ENCODE measurements at regions of chr10 and their contacts with region 1.

Region 1: DNA sequence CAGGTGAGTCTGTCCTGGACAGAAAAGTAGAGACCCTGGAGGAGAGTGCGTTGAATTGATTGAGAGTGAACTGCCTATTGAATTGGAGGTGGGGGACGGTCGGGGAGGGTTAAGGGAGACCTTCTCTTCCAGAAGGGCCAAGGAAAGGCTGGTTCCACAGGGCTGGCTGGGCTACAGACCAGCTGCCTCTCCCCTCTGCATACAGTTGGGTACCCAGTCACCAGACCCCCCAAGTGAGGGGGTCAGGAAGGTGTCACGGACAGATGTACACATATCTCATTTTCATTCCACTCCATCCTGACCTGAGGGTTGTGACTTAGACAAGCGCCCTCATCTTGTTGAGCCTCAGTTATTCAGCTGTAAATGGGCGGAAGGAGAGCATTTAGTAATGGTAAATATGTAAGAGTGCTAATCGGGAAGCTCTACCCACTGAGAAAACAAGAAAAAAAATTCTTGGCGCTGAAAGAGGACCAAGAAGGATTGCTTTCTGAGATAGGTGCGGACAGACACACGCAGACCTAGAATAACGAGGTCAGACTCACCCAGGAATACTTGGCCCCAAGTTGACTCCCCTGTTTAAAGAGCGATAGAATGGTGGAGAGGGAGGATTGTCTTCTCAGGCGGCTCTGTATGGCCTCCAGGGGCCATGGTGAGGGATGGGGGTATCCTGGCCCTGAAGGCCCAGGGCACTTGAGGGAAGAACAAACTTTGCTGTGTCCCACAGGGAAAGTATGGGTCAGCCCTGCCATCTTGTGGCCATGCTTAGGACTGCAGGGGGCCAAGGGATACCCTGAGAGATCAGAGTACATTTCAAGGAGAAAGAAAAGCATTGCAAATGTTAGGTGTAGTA is 7.2 kb upstream of the MBL2 start:
- DNase-seq: peak; percentile 81
- H3K4me3 ChIP-seq: peak overlapping the region in 1 of 2 experiments; percentile 57; a peak in 1 of 4 replicates
- H3K27ac ChIP-seq: no peak overlapping the region; a peak in 1 of 4 replicates
- H3K4me1 ChIP-seq: peaks cover 0 to 2% of the 10 kb centered on the region in 2 experiments; a peak in 1 of 4 replicates
- H3K27me3 ChIP-seq: no peaks in the 10 kb centered on the region
- CTCF ChIP-seq: peak; percentile 93
- EP300 ChIP-seq: no peak
- RAD21 ChIP-seq: peak; percentile 96

Region 2: DNA sequence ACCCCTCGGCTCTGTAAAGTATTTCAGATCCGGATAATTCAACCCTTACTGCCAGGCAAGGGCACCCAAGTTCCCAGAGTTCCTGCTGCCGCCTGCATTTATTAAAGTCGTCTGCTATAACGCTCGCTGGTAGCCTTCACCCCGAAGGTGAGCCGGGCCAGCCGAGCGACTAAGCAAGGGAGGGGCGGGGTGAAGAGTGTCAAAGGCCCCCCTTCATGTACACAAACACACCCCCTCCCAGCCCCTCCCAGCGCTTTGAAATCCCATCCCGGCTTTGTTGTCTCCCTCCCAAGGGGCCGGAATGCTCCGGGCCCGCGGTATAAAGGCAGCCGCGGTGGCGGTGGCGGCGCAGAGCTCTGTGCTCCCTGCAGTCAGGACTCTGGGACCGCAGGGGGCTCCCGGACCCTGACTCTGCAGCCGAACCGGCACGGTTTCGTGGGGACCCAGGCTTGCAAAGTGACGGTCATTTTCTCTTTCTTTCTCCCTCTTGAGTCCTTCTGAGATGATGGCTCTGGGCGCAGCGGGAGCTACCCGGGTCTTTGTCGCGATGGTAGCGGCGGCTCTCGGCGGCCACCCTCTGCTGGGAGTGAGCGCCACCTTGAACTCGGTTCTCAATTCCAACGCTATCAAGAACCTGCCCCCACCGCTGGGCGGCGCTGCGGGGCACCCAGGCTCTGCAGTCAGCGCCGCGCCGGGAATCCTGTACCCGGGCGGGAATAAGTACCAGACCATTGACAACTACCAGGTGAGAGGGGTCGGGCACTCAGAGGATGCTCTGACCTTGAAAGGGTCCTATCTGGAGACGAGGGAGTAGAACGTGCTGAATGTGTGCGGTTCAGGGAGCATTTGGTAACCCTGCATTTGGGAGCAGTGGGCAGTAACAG is 465.6 kb before region 1 on chr10 and contains the start of gene DKK1:
- CTCF ChIA-PET with region 1: interaction called, 59 read pairs
- POLR2A ChIA-PET with region 1: no interaction called
- DNase-seq: peak; percentile 89
- H3K4me3 ChIP-seq: peak within 1 kb of the TSS; percentile 95 to 99
- H3K27ac ChIP-seq: peak within 1 kb of the TSS; percentile 95
- H3K4me1 ChIP-seq: peaks cover 6 to 8% of the 10 kb centered on the region in 2 experiments; a peak in 2 of 4 replicates
- H3K27me3 ChIP-seq: no peaks in the 10 kb centered on the region
- CTCF ChIP-seq: peak; percentile 94
- EP300 ChIP-seq: no peak; a peak in 1 of 4 replicates
- RAD21 ChIP-seq: peak; percentile 52
- polyA plus RNA-seq, gene DKK1: 225 and 372 TPM in 2 replicates

Region 3: DNA sequence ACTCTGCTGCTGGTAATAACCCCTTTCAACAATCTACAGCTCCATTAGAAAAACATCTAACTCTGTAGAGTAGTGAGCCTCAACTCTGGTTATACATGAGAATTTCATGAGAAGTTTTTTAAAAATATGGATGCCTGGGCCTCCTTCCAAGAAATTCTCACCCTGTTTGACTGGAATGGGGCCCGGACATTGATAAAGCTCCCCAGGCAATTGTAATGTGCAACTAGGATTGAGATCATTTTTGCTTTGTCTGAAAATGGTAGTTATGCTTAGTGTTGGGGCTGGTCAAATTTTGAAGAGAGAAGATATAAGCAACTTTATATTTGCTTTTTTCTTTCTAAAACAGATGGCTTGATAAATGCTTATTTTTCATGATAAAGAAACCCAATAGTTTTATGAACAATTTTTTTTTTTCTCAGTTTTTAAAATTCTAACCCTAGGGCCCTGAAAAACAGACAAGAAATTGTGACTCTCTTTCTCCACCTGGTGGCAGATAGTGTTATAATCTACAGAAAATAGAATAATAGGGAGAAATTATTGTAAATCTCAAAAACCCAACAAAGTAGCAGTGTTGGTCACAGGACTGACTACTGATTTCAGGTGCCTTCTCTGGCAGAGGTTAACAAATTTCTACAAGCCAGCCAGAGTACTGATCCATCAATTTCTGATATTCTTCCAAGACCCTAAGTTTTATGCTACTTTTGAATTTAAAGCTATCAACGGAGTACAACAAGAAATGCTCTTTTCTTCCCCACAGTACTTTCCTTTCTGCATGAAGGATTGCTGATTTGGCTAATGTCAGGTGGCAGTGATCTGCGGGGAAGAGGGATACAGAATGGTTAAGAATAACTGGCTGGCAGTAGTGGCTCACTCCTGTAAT is 290.9 kb before region 1 on chr10:
- CTCF ChIA-PET with region 1: interaction called, 11 read pairs
- POLR2A ChIA-PET with region 1: no interaction called
- DNase-seq: peak; percentile 38
- H3K4me3 ChIP-seq: no peak overlapping the region; a peak in 1 of 4 replicates
- H3K27ac ChIP-seq: peak overlapping the region; percentile 47 to 89; a peak in 3 of 4 replicates
- H3K4me1 ChIP-seq: peaks cover 5 to 14% of the 10 kb centered on the region in 2 experiments; a peak in 3 of 4 replicates
- H3K27me3 ChIP-seq: no peaks in the 10 kb centered on the region
- CTCF ChIP-seq: peak; percentile 75
- EP300 ChIP-seq: no peak
- RAD21 ChIP-seq: peak; percentile 79

Region 4: DNA sequence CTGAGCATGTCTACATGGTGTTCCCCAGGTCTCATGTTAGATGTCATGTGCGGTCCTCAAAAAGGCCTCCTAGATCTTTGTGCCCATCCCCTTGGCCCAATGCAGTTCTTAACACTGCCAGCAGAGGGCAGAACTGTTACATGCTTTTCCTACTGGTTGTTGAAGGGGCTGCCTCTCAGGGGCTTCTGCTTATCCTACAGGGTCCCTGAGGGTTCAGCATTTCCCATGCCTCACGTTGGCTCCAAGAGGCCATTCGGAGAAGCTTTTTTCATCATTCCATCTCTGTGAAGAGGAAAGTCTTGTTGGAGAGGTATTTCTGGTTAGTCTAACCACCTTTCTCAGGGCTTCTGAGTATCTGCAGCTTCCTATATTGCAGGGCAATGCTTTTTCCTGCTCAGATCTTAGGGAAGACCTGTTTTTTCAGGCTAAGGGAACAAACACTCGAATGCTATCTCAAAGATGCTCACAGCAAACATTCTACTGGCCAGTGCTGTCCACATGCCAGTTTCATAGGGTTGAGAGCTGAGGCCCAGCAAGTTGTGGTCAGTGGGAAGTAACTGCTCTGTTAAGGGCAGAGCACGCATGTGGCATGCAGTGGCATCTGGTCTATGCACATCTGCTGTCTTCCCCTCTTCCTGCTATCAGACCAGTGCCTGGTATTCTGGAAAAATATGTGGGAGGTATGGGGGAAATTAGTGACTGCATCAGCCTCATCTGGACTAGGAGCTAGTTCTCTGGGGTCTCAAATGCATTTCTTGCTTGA is 38.7 kb before region 1 on chr10:
- CTCF ChIA-PET with region 1: interaction called, 18 read pairs
- POLR2A ChIA-PET with region 1: no interaction called
- DNase-seq: peak; percentile 44
- H3K4me3 ChIP-seq: no peak overlapping the region; a peak in 1 of 4 replicates
- H3K27ac ChIP-seq: no peak overlapping the region; a peak in 1 of 4 replicates
- H3K4me1 ChIP-seq: peaks cover 0 to 6% of the 10 kb centered on the region in 2 experiments; a peak in 1 of 4 replicates
- H3K27me3 ChIP-seq: no peaks in the 10 kb centered on the region
- CTCF ChIP-seq: peak; percentile 83
- EP300 ChIP-seq: no peak
- RAD21 ChIP-seq: peak; percentile 49

Region 5: GRCh38 chr10:52818019-52818418 is 38.3 kb after region 1 on chr10:
- CTCF ChIA-PET with region 1: interaction called, 11 read pairs
- POLR2A ChIA-PET with region 1: no interaction called
- DNase-seq: peak; percentile 6
- H3K4me3 ChIP-seq: peak overlapping the region in 1 of 2 experiments; percentile 35; a peak in 1 of 4 replicates
- H3K27ac ChIP-seq: no peak overlapping the region
- H3K4me1 ChIP-seq: no peaks in the 10 kb centered on the region
- H3K27me3 ChIP-seq: no peaks in the 10 kb centered on the region
- CTCF ChIP-seq: peak; percentile 60
- EP300 ChIP-seq: no peak
- RAD21 ChIP-seq: peak; percentile 73

Region 6: GRCh38 chr10:52923520-52923919 is 143.8 kb after region 1 on chr10:
- CTCF ChIA-PET with region 1: no interaction called
- POLR2A ChIA-PET with region 1: no interaction called
- DNase-seq: no peak
- H3K4me3 ChIP-seq: no peak overlapping the region
- H3K27ac ChIP-seq: no peak overlapping the region
- H3K4me1 ChIP-seq: no peaks in the 10 kb centered on the region
- H3K27me3 ChIP-seq: no peaks in the 10 kb centered on the region
- CTCF ChIP-seq: no peak
- EP300 ChIP-seq: no peak
- RAD21 ChIP-seq: no peak

Measured in SK-N-SH (cell line).